AG04449 (cell line): ENCODE measurements at regions of chr5 and their contacts with region 1.

Region 1: GRCh38 chr5:137778772-137779564 is 24.8 kb upstream of the HNRNPA0 start:
- DNase-seq: no peak
- H3K4me3 ChIP-seq: no peak overlapping the region
- CTCF ChIP-seq: peak; percentile 42

Region 2: GRCh38 chr5:137629646-137630045 is 149.3 kb before region 1 on chr5:
- CTCF ChIA-PET with region 1: interaction called, 13 read pairs
- POLR2A ChIA-PET with region 1: no interaction called
- DNase-seq: no peak
- H3K4me3 ChIP-seq: no peak overlapping the region
- CTCF ChIP-seq: peak; percentile 60

Region 3: GRCh38 chr5:137714946-137715345 is 64.0 kb before region 1 on chr5:
- CTCF ChIA-PET with region 1: no interaction called
- POLR2A ChIA-PET with region 1: no interaction called
- DNase-seq: no peak
- H3K4me3 ChIP-seq: no peak overlapping the region
- CTCF ChIP-seq: no peak

Region 4: GRCh38 chr5:137760330-137761188 is 18.4 kb before region 1 on chr5:
- CTCF ChIA-PET with region 1: interaction called, 19 read pairs
- POLR2A ChIA-PET with region 1: no interaction called
- DNase-seq: no peak
- H3K4me3 ChIP-seq: no peak overlapping the region
- CTCF ChIP-seq: no peak

Region 5: GRCh38 chr5:137800700-137801411 is 21.9 kb after region 1 on chr5:
- CTCF ChIA-PET with region 1: interaction called, 45 read pairs
- POLR2A ChIA-PET with region 1: no interaction called
- DNase-seq: no peak
- H3K4me3 ChIP-seq: no peak overlapping the region
- CTCF ChIP-seq: no peak

Region 6: DNA sequence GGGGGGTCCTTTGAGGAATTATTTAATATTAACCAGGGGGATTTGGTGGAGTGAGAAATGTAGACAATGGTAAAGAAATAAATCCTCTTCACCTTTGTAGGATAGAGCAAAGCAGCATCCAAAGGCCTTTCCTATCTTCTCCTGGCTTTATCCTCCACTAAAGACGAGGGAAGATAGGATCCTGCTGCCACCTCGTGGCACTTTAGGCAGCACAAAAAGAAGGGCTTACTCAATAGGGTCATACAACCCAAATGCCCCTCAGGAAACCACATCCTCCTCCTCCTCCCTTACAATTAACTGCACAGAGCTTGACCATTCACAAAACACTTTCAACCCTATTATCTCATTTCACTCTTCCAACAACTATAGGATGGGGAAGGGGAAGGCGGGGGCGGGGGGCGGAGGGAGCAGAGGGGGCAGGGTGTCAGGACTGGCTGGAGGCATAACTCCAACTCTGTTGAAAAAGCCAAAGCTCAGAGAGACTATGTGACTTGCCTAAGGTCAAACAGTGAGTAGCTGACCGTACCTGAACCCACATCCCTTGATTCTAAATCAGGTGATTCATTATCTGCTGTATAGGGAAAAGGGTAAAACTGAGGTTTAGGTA is 43.3 kb after region 1 on chr5:
- CTCF ChIA-PET with region 1: interaction called, 21 read pairs
- POLR2A ChIA-PET with region 1: no interaction called
- DNase-seq: no peak
- H3K4me3 ChIP-seq: no peak overlapping the region
- CTCF ChIP-seq: peak; percentile 39

Region 7: GRCh38 chr5:138065102-138065501 is 286.1 kb after region 1 on chr5:
- CTCF ChIA-PET with region 1: interaction called, 45 read pairs
- POLR2A ChIA-PET with region 1: no interaction called
- DNase-seq: no peak
- H3K4me3 ChIP-seq: no peak overlapping the region
- CTCF ChIP-seq: peak; percentile 22

Region 8: GRCh38 chr5:138128334-138128733 is 349.4 kb after region 1 on chr5:
- CTCF ChIA-PET with region 1: interaction called, 74 read pairs
- POLR2A ChIA-PET with region 1: no interaction called
- DNase-seq: no peak
- H3K4me3 ChIP-seq: no peak overlapping the region
- CTCF ChIP-seq: no peak